Caco-2 (cell line): ENCODE measurements at regions of chr9 and their contacts with region 1.

Region 1: DNA sequence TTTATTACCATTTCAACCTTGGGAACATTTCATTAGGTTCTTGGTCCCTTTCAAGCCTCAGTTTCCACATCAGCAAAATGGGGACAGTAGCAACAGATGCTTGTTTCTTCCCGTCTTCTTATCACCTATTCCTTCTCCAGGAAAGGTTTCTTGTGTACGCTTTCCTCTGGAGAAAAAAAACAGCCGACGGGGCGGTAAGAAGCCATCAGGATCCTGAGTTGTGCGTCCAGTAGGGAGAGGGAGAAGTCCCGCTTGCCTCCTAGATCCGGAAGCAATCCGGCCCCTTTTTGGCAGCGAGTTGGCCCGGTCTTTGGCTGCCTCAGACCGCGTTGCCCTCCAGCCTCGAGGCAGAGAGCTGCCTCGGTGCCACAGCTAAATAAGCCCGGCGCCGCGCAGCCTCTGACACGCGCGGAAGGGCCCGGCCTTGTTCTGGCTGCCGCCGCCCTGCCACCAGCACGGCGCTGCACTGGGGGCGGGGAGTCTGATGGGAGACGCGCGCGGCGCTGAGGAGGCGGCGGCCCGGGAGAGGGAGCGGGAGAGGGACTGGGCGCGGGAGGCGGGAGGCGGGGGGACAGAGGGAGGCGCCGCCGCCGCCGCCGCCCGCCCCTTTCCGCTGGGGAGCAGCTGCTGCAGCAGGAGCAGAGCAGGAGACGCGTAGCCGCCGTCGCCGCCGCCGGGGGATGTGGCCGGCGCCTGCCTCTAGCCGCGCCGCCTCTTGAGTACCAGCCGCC is at the start of gene SLC44A1:
- DNase-seq: peak; percentile 97 to 98
- H3K4me3 ChIP-seq: peak within 1 kb of the TSS; percentile 76
- H3K4me3 Mint-ChIP-seq: peak within 1 kb of the TSS; percentile 97
- H3K27ac Mint-ChIP-seq: peak within 1 kb of the TSS; percentile 91
- H3K4me1 ChIP-seq: peaks cover 14% of the 10 kb centered on the region
- H3K4me1 Mint-ChIP-seq: peaks cover 23% of the 10 kb centered on the region
- H3K27me3 ChIP-seq: no peaks in the 10 kb centered on the region
- H3K27me3 Mint-ChIP-seq: no peaks in the 10 kb centered on the region
- CTCF ChIP-seq: no peak
- total RNA-seq, gene SLC44A1: 45.8 and 46.3 TPM in 2 replicates

Region 2: GRCh38 chr9:104863180-104863883 is 380.8 kb before region 1 on chr9:
- CTCF ChIA-PET with region 1: interaction called, 12 read pairs
- POLR2A ChIA-PET with region 1: no interaction called
- intact Hi-C with region 1: loop called (anchors 10 kb)
- DNase-seq: peak; percentile 62 to 69
- H3K4me3 ChIP-seq: no peak overlapping the region
- H3K4me3 Mint-ChIP-seq: no peak overlapping the region
- H3K27ac Mint-ChIP-seq: no peak overlapping the region
- H3K4me1 ChIP-seq: 0 out of 2 replicates have a peak, but pooled peaks cover 11% of the 10 kb centered on the region
- H3K4me1 Mint-ChIP-seq: peaks cover 19% of the 10 kb centered on the region
- H3K27me3 ChIP-seq: no peaks in the 10 kb centered on the region
- H3K27me3 Mint-ChIP-seq: no peaks in the 10 kb centered on the region
- CTCF ChIP-seq: peak; percentile 68 to 85

Region 3: GRCh38 chr9:105299190-105299854 is 55.2 kb after region 1 on chr9:
- CTCF ChIA-PET with region 1: interaction called, 4 read pairs
- POLR2A ChIA-PET with region 1: interaction called, 4 read pairs
- intact Hi-C with region 1: loop called (anchors 5 kb)
- DNase-seq: no peak
- H3K4me3 ChIP-seq: no peak overlapping the region
- H3K4me3 Mint-ChIP-seq: no peak overlapping the region
- H3K27ac Mint-ChIP-seq: no peak overlapping the region
- H3K4me1 ChIP-seq: peaks cover 19% of the 10 kb centered on the region
- H3K4me1 Mint-ChIP-seq: peaks cover 15% of the 10 kb centered on the region
- H3K27me3 ChIP-seq: no peaks in the 10 kb centered on the region
- H3K27me3 Mint-ChIP-seq: no peaks in the 10 kb centered on the region
- CTCF ChIP-seq: no peak

Region 4: GRCh38 chr9:105359892-105360291 is 115.7 kb after region 1 on chr9:
- CTCF ChIA-PET with region 1: interaction called, 6 read pairs
- POLR2A ChIA-PET with region 1: no interaction called
- intact Hi-C with region 1: loop called (anchors 1 kb)
- DNase-seq: no peak
- H3K4me3 ChIP-seq: no peak overlapping the region
- H3K4me3 Mint-ChIP-seq: no peak overlapping the region
- H3K27ac Mint-ChIP-seq: no peak overlapping the region
- H3K4me1 ChIP-seq: no peaks in the 10 kb centered on the region
- H3K4me1 Mint-ChIP-seq: no peaks in the 10 kb centered on the region
- H3K27me3 ChIP-seq: no peaks in the 10 kb centered on the region
- H3K27me3 Mint-ChIP-seq: no peaks in the 10 kb centered on the region
- CTCF ChIP-seq: no peak